B cell (primary cell): ENCODE measurements at regions of chr13 and their contacts with region 1.

Region 1: DNA sequence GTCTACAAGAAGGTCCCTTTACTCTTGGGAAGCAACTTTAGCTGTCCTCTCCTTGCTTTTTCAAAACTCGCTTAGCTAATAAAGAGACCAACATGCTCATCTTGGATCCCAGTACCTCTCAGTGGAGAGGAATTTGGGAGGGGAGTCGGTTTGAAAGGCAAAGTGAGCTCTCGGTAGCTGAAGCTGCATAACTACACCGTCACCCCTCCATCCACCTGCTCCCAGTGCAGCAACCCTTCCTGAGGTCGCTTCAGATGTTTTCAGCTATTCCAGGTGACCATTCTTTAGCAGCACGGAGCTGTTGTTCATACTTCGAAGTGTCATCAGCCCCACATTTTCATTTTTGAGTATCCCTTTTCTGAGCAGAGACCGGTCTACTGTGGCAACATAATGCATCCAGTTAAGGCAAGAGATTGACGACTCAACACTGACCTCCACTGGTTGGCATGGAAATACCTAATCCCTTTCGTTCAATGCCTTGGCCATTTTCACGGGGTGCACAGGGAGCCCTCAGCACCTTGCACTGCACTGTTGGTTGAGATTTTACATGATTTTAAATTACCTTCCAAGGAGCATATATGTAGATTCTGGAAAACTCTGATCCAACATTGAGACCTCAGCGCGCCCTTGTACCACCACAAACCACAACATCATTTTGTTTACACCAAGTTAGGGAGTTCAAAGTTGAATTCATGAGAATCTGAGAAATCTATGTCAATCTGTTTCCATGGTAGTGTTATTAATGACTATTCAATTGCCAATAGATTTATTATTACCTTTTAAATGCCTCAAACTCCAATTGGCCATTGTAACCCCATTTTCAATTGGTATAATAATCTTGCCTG is 42.2 kb downstream of the DLEU7 start:
- DNase-seq: peak; percentile 91
- ATAC-seq: peak; percentile 82
- H3K4me3 ChIP-seq: peak overlapping the region in 2 of 5 experiments; percentile 31 to 47
- H3K4me3 Mint-ChIP-seq: peak overlapping the region; percentile 73
- H3K27ac ChIP-seq: peak overlapping the region; percentile 78 to 88
- H3K27ac Mint-ChIP-seq: peak overlapping the region; percentile 91
- H3K4me1 ChIP-seq: peaks cover 46 to 47% of the 10 kb centered on the region in 2 donors
- H3K4me1 Mint-ChIP-seq: peaks cover 44% of the 10 kb centered on the region
- H3K27me3 ChIP-seq: no peaks in the 10 kb centered on the region
- H3K27me3 Mint-ChIP-seq: no peaks in the 10 kb centered on the region
- CTCF ChIP-seq: peak; percentile 85

Region 2: GRCh38 chr13:49996951-49997895 is 804.1 kb before region 1 on chr13 and contains the start of gene TRIM13:
- CTCF ChIA-PET with region 1: interaction called, 39 read pairs
- POLR2A ChIA-PET with region 1: interaction called, 9 read pairs
- intact Hi-C with region 1: loop called (anchors 1 kb)
- DNase-seq: peak; percentile 93
- ATAC-seq: peak; percentile 74
- H3K4me3 ChIP-seq: peak within 1 kb of the TSS; percentile 78 to 96 (median 94)
- H3K4me3 Mint-ChIP-seq: peak within 1 kb of the TSS; percentile 90
- H3K27ac ChIP-seq: peak within 1 kb of the TSS; percentile 93
- H3K27ac Mint-ChIP-seq: peak within 1 kb of the TSS; percentile 96
- H3K4me1 ChIP-seq: peaks cover 30 to 42% of the 10 kb centered on the region in 2 donors
- H3K4me1 Mint-ChIP-seq: peaks cover 49% of the 10 kb centered on the region
- H3K27me3 ChIP-seq: no peaks in the 10 kb centered on the region
- H3K27me3 Mint-ChIP-seq: no peaks in the 10 kb centered on the region
- CTCF ChIP-seq: peak; percentile 89
- total RNA-seq, gene TRIM13: 45.9 and 52.8 TPM in 2 replicates

Region 3: DNA sequence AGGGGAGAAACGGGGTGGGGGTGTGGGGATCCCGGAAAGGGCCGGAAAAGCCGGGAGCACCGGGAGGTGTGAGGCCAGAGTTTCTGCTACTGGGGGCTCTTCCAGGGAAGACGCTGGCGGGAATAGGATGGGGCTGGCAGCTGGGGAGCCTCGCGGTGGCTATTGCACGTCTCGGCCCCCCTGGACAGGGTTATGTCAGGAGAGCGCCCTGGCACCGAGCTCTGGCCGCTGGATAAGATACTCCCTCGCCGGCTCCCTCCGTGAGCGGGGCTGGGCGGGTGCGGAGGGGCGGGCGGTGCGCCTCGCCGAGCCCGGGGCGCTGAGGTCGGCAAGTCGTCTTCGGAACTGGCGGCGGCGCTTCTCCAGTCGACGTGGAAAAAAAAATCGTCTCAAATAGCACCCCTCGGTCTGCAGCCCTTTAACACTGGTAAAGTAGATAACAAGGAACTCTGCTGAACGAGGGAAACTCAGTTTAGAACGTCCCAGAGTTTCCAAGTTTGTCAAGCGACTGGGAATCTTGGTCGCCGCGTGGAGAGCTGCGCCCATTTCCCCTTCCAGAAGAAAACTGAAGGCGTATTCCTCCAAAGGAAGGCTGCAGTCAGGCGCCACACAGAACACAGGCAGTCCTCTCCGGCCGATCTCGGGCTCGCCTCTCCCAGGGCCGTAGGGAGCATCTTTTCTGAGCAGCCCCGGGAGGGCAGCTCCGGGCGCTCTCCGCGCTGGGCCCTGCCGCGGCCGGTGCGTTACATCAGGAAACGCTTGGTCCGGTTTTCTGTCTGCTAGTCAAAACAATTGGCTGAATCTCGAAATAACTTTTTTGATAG is 671.0 kb before region 1 on chr13:
- CTCF ChIA-PET with region 1: interaction called, 25 read pairs
- POLR2A ChIA-PET with region 1: interaction called, 19 read pairs
- intact Hi-C with region 1: loop called (anchors 1 kb)
- DNase-seq: peak; percentile 71
- ATAC-seq: no peak
- H3K4me3 ChIP-seq: peak overlapping the region; percentile 43 to 87 (median 61)
- H3K4me3 Mint-ChIP-seq: peak overlapping the region; percentile 92
- H3K27ac ChIP-seq: no peak overlapping the region
- H3K27ac Mint-ChIP-seq: peak overlapping the region; percentile 86
- H3K4me1 ChIP-seq: peaks cover 72 to 73% of the 10 kb centered on the region in 2 donors
- H3K4me1 Mint-ChIP-seq: peaks cover 63% of the 10 kb centered on the region
- H3K27me3 ChIP-seq: peaks cover 2 to 68% (median 47%) of the 10 kb centered on the region in 4 experiments
- H3K27me3 Mint-ChIP-seq: peaks cover 35% of the 10 kb centered on the region
- CTCF ChIP-seq: no peak

Region 4: DNA sequence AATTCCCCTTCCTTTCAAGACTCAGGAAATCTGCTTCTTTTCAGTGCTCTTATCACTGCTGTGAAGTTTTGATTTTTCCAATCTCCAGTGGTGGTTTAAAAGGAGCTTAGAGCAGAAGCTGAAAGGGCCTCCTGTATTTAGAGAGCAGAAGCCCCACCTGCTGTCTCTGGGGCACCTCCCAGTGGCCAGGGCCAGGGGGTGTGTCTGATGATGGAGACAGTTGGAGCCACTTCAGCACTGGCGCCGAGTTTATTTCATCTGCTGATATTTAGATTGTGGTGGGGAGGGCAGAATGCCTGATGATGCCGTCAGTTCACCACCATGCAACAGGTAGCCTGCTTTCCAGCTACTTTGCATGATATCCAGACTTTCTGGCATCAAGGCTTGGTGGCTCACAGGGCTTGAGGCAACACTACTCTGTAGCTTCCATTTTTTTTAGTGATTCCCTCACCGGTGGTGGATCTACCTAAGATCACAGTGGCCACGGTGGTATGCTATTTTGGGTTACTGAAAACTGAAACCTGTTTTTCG is 414.2 kb before region 1 on chr13:
- CTCF ChIA-PET with region 1: interaction called, 15 read pairs
- POLR2A ChIA-PET with region 1: no interaction called
- intact Hi-C with region 1: no loop called
- DNase-seq: peak; percentile 46
- ATAC-seq: peak; percentile 71
- H3K4me3 ChIP-seq: no peak overlapping the region
- H3K4me3 Mint-ChIP-seq: no peak overlapping the region
- H3K27ac ChIP-seq: no peak overlapping the region
- H3K27ac Mint-ChIP-seq: no peak overlapping the region
- H3K4me1 ChIP-seq: no peaks in the 10 kb centered on the region
- H3K4me1 Mint-ChIP-seq: peaks cover 7% of the 10 kb centered on the region
- H3K27me3 ChIP-seq: no peaks in the 10 kb centered on the region
- H3K27me3 Mint-ChIP-seq: no peaks in the 10 kb centered on the region
- CTCF ChIP-seq: peak; percentile 42

Region 5: GRCh38 chr13:50529154-50529882 is 272.0 kb before region 1 on chr13:
- CTCF ChIA-PET with region 1: interaction called, 10 read pairs
- POLR2A ChIA-PET with region 1: interaction called, 3 read pairs
- intact Hi-C with region 1: loop called (anchors 1 kb)
- DNase-seq: no peak
- ATAC-seq: no peak
- H3K4me3 ChIP-seq: no peak overlapping the region
- H3K4me3 Mint-ChIP-seq: no peak overlapping the region
- H3K27ac ChIP-seq: no peak overlapping the region
- H3K27ac Mint-ChIP-seq: no peak overlapping the region
- H3K4me1 ChIP-seq: peaks cover 24 to 25% of the 10 kb centered on the region in 2 donors
- H3K4me1 Mint-ChIP-seq: peaks cover 35% of the 10 kb centered on the region
- H3K27me3 ChIP-seq: no peaks in the 10 kb centered on the region
- H3K27me3 Mint-ChIP-seq: no peaks in the 10 kb centered on the region
- CTCF ChIP-seq: no peak

Region 6: GRCh38 chr13:50635504-50635903 is 165.8 kb before region 1 on chr13:
- CTCF ChIA-PET with region 1: interaction called, 14 read pairs
- POLR2A ChIA-PET with region 1: interaction called, 3 read pairs
- intact Hi-C with region 1: loop called (anchors 2 kb)
- DNase-seq: peak; percentile 90
- ATAC-seq: peak; percentile 79
- H3K4me3 ChIP-seq: no peak overlapping the region
- H3K4me3 Mint-ChIP-seq: peak overlapping the region; percentile 63
- H3K27ac ChIP-seq: peak overlapping the region; percentile 92 to 95
- H3K27ac Mint-ChIP-seq: peak overlapping the region; percentile 96
- H3K4me1 ChIP-seq: peaks cover 26 to 30% of the 10 kb centered on the region in 2 donors
- H3K4me1 Mint-ChIP-seq: peaks cover 44% of the 10 kb centered on the region
- H3K27me3 ChIP-seq: no peaks in the 10 kb centered on the region
- H3K27me3 Mint-ChIP-seq: no peaks in the 10 kb centered on the region
- CTCF ChIP-seq: no peak

Region 7: GRCh38 chr13:51070005-51070649 is 268.8 kb after region 1 on chr13:
- CTCF ChIA-PET with region 1: interaction called, 4 read pairs
- POLR2A ChIA-PET with region 1: no interaction called
- intact Hi-C with region 1: loop called (anchors 5 kb)
- DNase-seq: peak; percentile 83
- ATAC-seq: peak; percentile 91
- H3K4me3 ChIP-seq: no peak overlapping the region
- H3K4me3 Mint-ChIP-seq: no peak overlapping the region
- H3K27ac ChIP-seq: no peak overlapping the region
- H3K27ac Mint-ChIP-seq: no peak overlapping the region
- H3K4me1 ChIP-seq: peaks cover 11 to 19% of the 10 kb centered on the region in 2 donors
- H3K4me1 Mint-ChIP-seq: peaks cover 12% of the 10 kb centered on the region
- H3K27me3 ChIP-seq: peaks cover 0 to 20% (median 10%) of the 10 kb centered on the region in 4 experiments
- H3K27me3 Mint-ChIP-seq: peaks cover 30% of the 10 kb centered on the region
- CTCF ChIP-seq: peak; percentile 97